Right cardiac atrium (tissue), 5 donors: ENCODE measurements at regions of chr1 and their contacts with region 1.

Region 1: DNA sequence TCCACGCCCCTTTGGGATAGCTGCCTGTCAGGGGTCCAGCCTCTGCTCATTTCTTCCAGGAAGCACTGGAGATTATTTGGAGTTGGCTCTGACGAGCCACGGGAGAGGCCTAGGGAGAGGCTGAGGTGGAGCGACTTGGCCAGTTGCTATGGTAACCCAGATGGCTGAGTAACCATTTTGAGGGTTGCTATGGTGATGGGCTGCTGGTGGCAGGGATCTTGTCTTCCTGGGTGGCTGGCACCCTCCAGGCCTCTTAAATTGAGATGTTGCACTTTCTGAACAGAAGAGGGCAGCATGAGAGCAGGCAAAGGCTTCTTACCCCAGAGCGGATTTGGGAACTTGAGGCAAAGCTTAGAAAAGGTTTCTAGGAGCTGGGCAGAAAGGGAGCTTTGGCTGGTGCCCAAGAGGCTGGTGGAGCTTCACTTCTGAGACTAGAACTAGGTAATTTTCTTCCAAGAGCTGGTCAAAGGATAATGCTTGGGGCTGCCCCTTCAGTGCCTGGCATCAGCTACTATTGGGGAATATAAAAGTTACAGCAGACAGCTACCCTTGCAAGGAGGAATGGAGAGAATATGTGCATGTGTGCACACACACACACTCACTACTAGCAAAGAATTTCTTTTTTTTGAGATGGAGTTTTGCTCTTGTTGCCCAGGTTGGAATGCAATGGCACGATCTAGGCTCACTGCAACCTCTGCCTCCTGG is 72.5 kb downstream of the NDUFS5 start:
- DNase-seq: peak; percentile 63 to 75 (median 67)
- ATAC-seq: peak; percentile 67 to 70
- H3K4me3 ChIP-seq: no peak overlapping the region
- H3K27ac ChIP-seq: no peak overlapping the region
- H3K4me1 ChIP-seq: no peaks in the 10 kb centered on the region
- H3K27me3 ChIP-seq: no peaks in the 10 kb centered on the region

Region 2: GRCh38 chr1:38859561-38860453 is 238.9 kb before region 1 on chr1 and contains the start of gene RRAGC:
- intact Hi-C with region 1: loop called in 1 of 4 experiments (anchors 10 kb)
- DNase-seq: peak; percentile 100
- ATAC-seq: peak; percentile 99
- H3K4me3 ChIP-seq: peak within 1 kb of the TSS; percentile 90
- H3K27ac ChIP-seq: peak within 1 kb of the TSS; percentile 87
- H3K4me1 ChIP-seq: peaks cover 8% of the 10 kb centered on the region
- H3K27me3 ChIP-seq: no peaks in the 10 kb centered on the region
- total RNA-seq, gene RRAGC: 16.2 to 21.8 (median 18.7) TPM

Region 3: GRCh38 chr1:39189592-39190041 is 90.9 kb after region 1 on chr1:
- intact Hi-C with region 1: loop called (anchors 2 to 10 kb)
- DNase-seq: no peak
- ATAC-seq: no peak
- H3K4me3 ChIP-seq: no peak overlapping the region
- H3K27ac ChIP-seq: no peak overlapping the region
- H3K4me1 ChIP-seq: no peaks in the 10 kb centered on the region
- H3K27me3 ChIP-seq: no peaks in the 10 kb centered on the region

Region 4: DNA sequence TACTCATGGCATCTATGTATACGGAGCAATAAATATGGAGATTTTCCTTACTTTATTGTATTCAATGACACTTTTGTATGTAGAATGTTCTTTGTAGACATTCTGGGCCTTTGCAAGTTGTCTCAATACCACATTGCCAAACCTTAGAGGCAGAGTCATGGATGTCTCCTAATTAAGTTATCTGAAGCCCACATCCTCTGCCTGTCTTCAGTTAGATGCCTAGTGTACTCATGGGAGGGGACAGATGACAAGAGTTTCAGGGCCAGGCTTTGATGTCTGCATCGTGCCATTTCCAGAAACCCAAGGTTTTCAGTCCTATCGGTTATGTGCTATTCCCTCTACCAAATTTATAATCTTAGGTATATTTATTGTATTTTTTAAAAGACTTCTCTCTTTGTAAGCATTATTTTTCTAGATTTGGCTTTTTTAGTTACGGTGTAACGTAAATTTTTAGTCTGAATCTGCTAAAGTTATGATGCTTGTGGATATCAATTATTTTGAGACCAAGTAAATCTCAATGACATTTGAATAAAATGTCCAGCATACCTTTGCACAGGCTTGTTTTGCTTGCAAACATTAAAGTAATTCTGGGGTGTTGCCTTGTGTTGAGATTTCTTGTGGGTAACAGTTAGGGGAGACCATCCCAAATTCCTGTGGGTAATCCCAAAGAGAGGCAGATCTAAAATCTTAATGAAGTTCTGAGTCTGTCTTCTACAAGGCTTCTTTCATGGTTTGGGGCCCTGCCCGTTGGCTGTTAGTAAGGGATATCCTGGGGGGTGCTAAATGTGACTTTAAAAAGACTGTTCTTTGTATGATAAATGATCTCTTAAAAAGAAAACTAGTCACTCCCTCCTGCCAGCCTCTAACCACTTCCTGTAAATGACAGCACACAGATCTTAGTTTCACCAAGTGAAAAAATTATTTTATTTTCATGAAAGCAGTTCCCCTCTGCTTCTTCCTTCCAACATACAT is 97.8 kb after region 1 on chr1:
- intact Hi-C with region 1: loop called (anchors 2 to 10 kb)
- DNase-seq: no peak
- ATAC-seq: peak in 1 of 2 donors; percentile 20
- H3K4me3 ChIP-seq: no peak overlapping the region
- H3K27ac ChIP-seq: no peak overlapping the region
- H3K4me1 ChIP-seq: peaks cover 2% of the 10 kb centered on the region
- H3K27me3 ChIP-seq: no peaks in the 10 kb centered on the region

Region 5: GRCh38 chr1:39453603-39454002 is 354.9 kb after region 1 on chr1:
- intact Hi-C with region 1: no loop called
- DNase-seq: peak; percentile 67 to 87 (median 79)
- ATAC-seq: peak; percentile 33 to 53
- H3K4me3 ChIP-seq: no peak overlapping the region
- H3K27ac ChIP-seq: no peak overlapping the region
- H3K4me1 ChIP-seq: no peaks in the 10 kb centered on the region
- H3K27me3 ChIP-seq: no peaks in the 10 kb centered on the region

Region 6: GRCh38 chr1:39529901-39530535 is 431.3 kb after region 1 on chr1:
- intact Hi-C with region 1: loop called in 1 of 4 experiments (anchors 5 kb)
- DNase-seq: peak in 1 of 3 donors; percentile 12
- ATAC-seq: peak in 1 of 2 donors; percentile 25
- H3K4me3 ChIP-seq: no peak overlapping the region
- H3K27ac ChIP-seq: no peak overlapping the region
- H3K4me1 ChIP-seq: no peaks in the 10 kb centered on the region
- H3K27me3 ChIP-seq: no peaks in the 10 kb centered on the region